PC-3 (cell line): ENCODE measurements at regions of chr9 and their contacts with region 1.

Region 1: DNA sequence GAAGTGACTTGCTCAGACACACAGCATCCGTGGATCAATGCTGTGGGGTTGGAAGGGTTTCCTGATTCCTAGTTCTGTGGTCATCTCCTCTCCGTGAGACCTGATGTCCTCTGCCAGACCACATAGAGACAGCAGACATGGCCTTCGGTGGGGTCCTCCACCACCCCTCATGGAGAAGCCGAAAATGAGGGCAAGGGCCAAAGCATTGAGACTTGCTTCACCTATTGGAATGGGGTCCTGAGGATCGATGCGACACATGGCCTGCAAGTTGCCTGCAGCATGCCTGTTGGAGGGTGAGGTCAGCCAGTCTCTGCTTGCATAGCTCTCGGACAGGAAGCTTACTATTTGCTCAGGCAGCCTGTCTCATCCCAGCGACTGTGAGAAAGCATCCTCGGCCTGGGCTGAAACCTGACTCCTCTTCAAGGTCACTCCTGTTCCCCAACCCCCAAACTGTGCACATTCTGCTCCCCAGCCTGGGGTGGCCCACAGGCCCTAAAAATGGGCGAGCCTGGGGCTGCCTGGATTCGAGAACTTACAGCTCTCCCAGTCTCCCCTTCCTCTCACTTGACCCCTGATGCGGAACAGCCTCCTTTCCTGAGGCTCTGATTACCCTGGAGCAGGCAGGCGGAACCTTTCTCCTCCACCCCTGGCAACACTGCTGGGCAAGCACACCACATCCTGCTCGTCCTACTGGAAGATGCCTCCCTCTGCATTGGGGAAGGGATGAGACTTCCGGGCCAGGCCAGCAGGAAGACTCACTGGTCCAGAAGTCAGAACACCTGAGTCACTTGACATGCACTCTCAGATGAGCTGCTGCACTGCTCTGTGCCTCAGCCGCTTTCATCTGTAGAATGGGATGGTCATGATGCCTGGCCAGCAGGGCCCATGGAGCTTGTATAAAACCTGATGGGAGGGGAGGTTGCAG is 186.9 kb downstream of the RGS3 start:
- DNase-seq: peak; percentile 77
- ATAC-seq: peak; percentile 93
- H3K4me3 ChIP-seq: no peak overlapping the region
- H3K27ac ChIP-seq: peak overlapping the region; percentile 92
- H3K4me1 ChIP-seq: peaks cover 18% of the 10 kb centered on the region
- H3K27me3 ChIP-seq: no peaks in the 10 kb centered on the region
- CTCF ChIP-seq: no peak

Region 2: DNA sequence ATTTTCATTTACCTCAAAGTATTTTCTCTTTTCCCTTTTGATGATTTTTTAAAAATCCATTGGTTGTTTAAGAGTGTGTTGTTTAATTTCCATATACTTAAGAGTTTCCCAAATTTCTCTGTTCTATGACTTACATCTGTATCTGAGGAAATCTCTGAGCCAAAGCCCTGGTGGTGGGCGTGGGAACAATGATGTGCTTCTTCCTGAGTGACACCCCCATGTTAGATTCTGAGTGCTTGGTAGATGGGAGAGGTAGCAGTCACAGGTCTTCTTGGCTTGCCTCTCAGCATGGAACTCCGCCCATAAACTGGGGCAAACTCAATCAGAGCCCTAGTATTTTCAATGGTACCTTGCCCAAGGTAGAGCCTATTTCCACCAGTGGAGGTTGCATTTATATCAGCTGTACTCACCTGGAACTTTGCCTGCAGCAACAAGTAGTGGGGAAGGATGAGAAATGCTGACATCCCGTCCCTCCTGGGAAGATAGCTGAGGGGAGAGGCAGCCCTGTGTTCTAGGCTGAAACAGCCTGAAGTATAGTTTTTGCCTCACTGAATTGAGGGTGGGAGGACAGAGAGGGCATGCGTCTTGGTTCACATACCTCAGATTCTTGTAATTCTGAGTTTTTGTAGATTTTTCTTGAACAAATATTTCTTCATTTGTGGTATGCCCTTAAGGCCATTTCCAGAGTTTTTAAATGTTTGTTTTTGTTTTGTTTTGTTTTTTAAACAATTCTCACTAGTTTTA is 213.6 kb before region 1 on chr9:
- CTCF ChIA-PET with region 1: no interaction called
- POLR2A ChIA-PET with region 1: no interaction called
- intact Hi-C with region 1: no loop called
- DNase-seq: no peak
- ATAC-seq: peak; percentile 35; the same call in 1 of the 2 replicates
- H3K4me3 ChIP-seq: no peak overlapping the region
- H3K27ac ChIP-seq: no peak overlapping the region
- H3K4me1 ChIP-seq: no peaks in the 10 kb centered on the region
- H3K27me3 ChIP-seq: no peaks in the 10 kb centered on the region
- CTCF ChIP-seq: no peak

Region 3: DNA sequence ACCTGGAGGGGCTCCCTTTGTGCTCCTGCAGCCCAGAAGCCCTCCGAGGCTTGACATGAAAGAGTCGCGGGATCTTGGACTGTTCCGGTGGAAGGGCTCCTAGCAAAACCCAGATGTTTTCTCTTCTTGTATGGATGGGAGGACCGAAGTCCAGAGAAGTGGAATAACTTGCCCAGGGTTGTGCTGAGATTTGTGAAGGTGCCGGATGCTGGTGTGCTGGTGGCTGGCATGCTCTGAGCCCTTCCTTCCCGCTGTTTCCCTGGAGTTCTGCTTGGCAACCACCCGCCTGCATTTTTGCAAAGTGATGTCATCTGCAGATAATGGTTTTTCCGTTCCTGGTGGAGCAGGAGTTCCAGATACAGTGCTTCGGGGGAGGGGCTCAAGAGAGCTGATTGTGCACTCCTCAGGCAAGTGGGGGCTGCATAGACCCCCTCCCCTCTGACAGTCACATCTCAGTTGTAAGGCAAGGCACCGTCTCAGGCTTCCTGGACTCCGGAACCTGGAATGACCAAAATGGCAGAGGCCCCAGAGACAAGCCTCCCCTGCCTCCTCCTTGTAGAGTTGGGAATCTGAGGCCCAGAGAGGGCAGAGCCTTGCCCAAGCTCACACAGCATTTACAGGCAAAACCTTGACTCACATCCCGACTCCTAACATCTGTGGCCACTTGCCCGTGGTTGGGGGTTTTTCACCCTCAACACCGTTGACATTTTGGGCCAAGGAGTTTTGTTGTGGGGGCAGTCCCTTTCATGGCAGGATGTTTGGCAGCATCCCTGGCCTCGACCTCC is 29.9 kb before region 1 on chr9:
- CTCF ChIA-PET with region 1: no interaction called
- POLR2A ChIA-PET with region 1: no interaction called
- intact Hi-C with region 1: loop called (anchors 2 kb)
- DNase-seq: peak; percentile 82
- ATAC-seq: peak; percentile 90
- H3K4me3 ChIP-seq: no peak overlapping the region
- H3K27ac ChIP-seq: peak overlapping the region; percentile 55
- H3K4me1 ChIP-seq: peaks cover 33% of the 10 kb centered on the region
- H3K27me3 ChIP-seq: no peaks in the 10 kb centered on the region
- CTCF ChIP-seq: no peak

Region 4: GRCh38 chr9:113741886-113742854 is 91.7 kb after region 1 on chr9:
- CTCF ChIA-PET with region 1: no interaction called
- POLR2A ChIA-PET with region 1: no interaction called
- intact Hi-C with region 1: no loop called
- DNase-seq: no peak
- ATAC-seq: no peak
- H3K4me3 ChIP-seq: no peak overlapping the region
- H3K27ac ChIP-seq: no peak overlapping the region
- H3K4me1 ChIP-seq: peaks cover 9% of the 10 kb centered on the region; the same call in 1 of the 2 replicates
- H3K27me3 ChIP-seq: peaks cover 3% of the 10 kb centered on the region; the same call in 1 of the 2 replicates
- CTCF ChIP-seq: no peak

Region 5: GRCh38 chr9:113764582-113764981 is 114.1 kb after region 1 on chr9:
- CTCF ChIA-PET with region 1: no interaction called
- POLR2A ChIA-PET with region 1: no interaction called
- intact Hi-C with region 1: no loop called
- DNase-seq: no peak
- ATAC-seq: no peak
- H3K4me3 ChIP-seq: no peak overlapping the region
- H3K27ac ChIP-seq: no peak overlapping the region
- H3K4me1 ChIP-seq: no peaks in the 10 kb centered on the region
- H3K27me3 ChIP-seq: peaks cover 6% of the 10 kb centered on the region; the same call in 1 of the 2 replicates
- CTCF ChIP-seq: no peak